ENCODE measurements at regions of chr12 and their contacts with region 1.

Region 1: DNA sequence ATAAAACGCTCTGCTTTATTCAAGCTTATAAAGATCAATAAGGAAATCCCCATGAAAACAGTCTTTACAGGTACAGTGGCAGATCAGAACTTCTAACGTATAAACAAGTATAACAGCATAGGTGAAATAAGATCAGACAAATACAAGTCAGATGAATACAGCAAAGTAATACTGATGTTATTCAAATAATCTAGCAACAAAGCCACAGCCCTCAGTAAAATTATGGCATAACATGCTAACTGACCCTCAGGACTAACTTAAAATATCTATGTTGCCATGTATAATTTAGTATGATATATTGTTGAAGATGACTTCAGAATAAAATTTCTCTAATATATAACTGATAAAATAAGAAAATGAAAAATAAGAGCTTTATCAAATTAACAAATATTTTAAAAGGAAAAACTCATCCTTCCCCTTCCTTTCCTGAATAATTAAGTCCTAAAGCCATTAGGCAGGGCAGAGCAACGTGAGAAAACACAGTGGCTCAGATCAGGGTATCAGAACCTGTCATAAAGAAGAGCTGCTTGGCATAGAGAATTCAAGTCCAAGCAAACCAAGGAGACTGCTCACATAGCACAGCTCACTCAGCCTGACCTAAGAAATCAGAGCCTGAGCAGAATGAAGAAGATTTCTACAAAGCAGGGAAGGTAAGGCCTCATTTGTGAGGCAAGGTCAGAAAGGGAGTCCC is 70.7 kb downstream of the PAWR start:
- DNase-seq: no peak
- H3K4me3 ChIP-seq: no peak overlapping the region
- H3K27ac ChIP-seq: no peak overlapping the region
- H3K27me3 ChIP-seq: no peaks in the 10 kb centered on the region
- CTCF ChIP-seq: no peak

Region 2: GRCh38 chr12:79737875-79738718 is 118.1 kb after region 1 on chr12:
- CTCF ChIA-PET with region 1: interaction called, 14 read pairs
- POLR2A ChIA-PET with region 1: no interaction called
- DNase-seq: no peak
- H3K4me3 ChIP-seq: no peak overlapping the region
- H3K27ac ChIP-seq: no peak overlapping the region
- H3K27me3 ChIP-seq: no peaks in the 10 kb centered on the region
- CTCF ChIP-seq: peak; percentile 71

Measured in AG04450 (cell line).